H1 (cell line): ENCODE measurements at regions of chr7 and their contacts with region 1.

Region 1: DNA sequence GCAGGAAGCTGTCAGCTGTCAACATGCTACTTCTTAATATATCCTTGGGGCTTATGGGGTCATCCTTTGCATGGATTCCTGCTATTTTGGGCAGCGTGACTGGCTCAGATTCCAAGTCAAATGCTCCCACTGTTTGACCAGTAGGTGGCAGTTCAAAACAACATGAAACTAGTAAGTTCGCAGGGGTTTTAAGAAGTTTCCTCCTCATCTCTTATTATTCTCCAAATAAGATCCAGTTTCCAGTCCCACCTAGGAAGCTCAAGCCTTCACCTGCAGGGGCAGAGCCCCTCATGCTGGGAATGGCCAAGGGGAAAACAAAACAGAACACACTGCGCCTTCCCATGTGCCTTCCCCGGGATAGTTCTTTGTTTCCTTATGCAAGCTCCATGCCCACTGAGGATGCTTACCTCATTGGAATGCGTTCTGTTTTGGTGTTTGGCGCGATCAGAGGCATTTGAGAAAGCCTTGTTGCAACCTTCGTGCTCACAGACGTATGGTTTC is 259.8 kb downstream of the GLI3 start:
- DNase-seq: peak in 1 of 2 experiments; percentile 55
- H3K4me3 ChIP-seq: no peak overlapping the region
- H3K27ac ChIP-seq: peak overlapping the region; percentile 13; the same call in 1 of the 2 replicates
- H3K4me1 ChIP-seq: peaks cover 0 to 11% (median 4%) of the 10 kb centered on the region in 4 experiments; a peak in 5 of 7 replicates
- H3K27me3 ChIP-seq: no peaks in the 10 kb centered on the region
- CTCF ChIP-seq: peak; percentile 27 to 67 (median 60)
- EP300 ChIP-seq: no peak
- POLR2A ChIP-seq: no peak
- RAD21 ChIP-seq: peak; percentile 64 to 78

Region 2: DNA sequence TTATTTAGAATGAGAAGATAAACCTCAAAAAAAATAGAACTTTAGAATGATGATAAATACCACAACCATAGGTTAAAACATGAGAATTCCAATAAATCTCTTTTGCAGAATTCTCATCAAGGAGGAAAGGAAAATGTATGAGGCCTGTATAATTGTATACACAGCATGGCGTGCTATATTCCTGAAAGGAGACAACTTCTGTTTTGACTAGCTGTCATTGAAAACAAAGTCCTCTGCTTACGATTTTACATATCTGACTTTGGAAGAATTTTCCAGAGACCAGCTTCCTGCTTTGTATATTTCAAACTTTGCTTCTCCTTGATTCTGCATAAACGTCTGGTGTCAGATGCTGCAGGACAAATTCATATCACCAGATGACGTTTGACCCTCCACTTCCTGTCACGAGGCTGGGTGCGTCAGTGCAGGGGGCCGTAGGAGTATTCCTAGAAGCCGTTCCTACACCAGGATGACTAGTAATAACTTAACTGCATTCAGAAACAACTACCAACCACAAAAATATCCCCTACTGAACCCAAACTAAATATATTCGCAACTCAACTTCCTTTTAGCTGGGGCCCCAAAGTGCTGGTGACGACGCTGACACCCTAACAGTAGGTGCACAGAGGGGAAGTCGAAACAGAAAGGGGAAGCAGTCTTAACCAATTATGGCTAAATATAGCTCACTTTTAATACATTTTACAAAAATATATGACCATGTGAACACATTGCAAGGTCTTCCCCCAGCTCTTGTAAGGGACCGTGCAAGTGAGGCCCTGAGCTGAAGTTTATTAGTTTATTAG is 95.7 kb before region 1 on chr7:
- CTCF ChIA-PET with region 1: no interaction called
- POLR2A ChIA-PET with region 1: no interaction called
- DNase-seq: no peak
- H3K4me3 ChIP-seq: no peak overlapping the region; a peak in 1 of 8 replicates
- H3K27ac ChIP-seq: no peak overlapping the region
- H3K4me1 ChIP-seq: peaks cover 0 to 4% (median 0%) of the 10 kb centered on the region in 4 experiments; a peak in 1 of 7 replicates
- H3K27me3 ChIP-seq: no peaks in the 10 kb centered on the region
- CTCF ChIP-seq: no peak
- EP300 ChIP-seq: no peak
- POLR2A ChIP-seq: no peak
- RAD21 ChIP-seq: no peak

Region 3: DNA sequence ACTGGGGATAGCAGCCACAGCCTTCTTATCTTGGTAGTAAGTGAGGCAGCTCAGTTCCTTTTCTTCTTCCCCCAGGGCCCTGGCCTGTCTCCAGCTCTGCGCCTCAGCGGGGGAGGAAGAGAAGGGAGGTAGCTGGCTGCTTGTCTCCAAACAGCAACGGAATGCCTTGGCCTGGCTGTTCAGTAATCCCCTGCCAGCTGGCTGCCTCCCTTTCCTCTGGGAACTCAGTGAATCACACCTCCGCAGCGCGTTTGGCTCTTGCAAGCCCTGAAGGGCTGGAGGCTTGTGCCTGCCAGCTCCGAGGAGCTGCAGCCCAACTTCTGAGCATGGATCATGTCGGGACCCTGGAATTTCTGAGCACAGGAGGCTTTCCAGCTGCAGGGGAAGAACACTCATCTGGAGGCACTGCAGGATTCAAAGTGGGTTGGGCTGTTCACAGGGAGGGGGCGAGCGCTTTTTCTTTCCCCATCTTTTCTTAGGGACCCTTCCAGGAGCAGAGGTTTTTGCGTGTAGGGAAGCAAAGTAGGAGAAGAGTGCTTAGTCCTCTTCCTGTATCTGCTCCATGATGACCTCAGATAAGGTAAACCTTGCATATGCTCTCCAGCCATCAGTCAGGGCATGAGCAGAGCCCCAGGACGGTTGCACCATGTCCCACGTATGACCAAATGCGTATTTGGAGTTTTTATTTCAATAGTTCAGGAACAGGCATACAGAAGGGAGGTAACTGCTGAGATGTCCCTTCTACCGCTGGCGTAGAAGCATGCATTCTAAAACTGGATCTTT is 21.1 kb before region 1 on chr7:
- CTCF ChIA-PET with region 1: interaction called, 13 read pairs
- POLR2A ChIA-PET with region 1: no interaction called
- DNase-seq: peak; percentile 57 to 66
- H3K4me3 ChIP-seq: no peak overlapping the region
- H3K27ac ChIP-seq: no peak overlapping the region
- H3K4me1 ChIP-seq: peaks cover 0 to 9% (median 7%) of the 10 kb centered on the region in 4 experiments; a peak in 6 of 7 replicates
- H3K27me3 ChIP-seq: peaks cover 0 to 2% (median 0%) of the 10 kb centered on the region in 4 experiments; a peak in 2 of 7 replicates
- CTCF ChIP-seq: no peak
- EP300 ChIP-seq: no peak
- POLR2A ChIP-seq: no peak
- RAD21 ChIP-seq: peak; percentile 15 to 16; a peak in 2 of 4 replicates

Region 4: GRCh38 chr7:42002654-42003053 is 25.5 kb after region 1 on chr7:
- CTCF ChIA-PET with region 1: interaction called, 14 read pairs
- POLR2A ChIA-PET with region 1: no interaction called
- DNase-seq: no peak
- H3K4me3 ChIP-seq: no peak overlapping the region
- H3K27ac ChIP-seq: no peak overlapping the region
- H3K4me1 ChIP-seq: no peaks in the 10 kb centered on the region
- H3K27me3 ChIP-seq: no peaks in the 10 kb centered on the region
- CTCF ChIP-seq: no peak
- EP300 ChIP-seq: no peak
- POLR2A ChIP-seq: no peak
- RAD21 ChIP-seq: no peak

Region 5: DNA sequence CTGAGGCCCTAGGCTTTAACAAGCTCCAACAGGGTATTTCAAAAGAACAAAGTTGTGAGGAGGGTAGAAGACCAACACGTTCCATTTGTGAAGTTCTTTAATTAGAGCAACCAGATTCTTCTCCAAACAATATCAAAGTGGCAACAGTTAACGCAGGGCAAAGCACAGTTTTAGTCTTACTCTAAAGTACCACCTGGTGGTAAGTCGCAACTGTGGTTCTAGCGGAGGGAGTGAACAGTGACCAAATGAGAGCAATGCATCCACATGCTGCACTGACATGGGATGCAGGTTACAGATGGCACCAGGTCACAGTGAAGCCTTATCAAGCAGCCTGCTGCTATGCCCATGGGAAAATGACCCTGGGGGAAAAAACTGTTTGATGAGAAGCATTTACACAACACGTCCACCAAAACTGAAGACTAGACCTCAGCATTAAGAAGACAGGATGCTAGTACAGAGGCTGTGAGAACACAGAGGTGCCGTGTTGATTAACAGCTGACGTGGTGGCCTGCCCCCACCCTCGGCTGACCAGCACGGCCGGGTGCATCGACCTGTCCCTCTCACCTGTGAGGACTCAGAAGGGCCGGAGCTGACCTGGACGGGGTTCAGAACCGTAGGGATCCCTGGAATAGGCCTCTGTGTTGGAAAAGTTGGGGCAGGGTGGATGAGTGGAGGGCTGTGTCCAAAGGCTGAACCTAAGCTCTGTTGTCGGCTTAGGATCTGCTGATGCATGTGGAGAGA is 48.6 kb after region 1 on chr7:
- CTCF ChIA-PET with region 1: interaction called, 33 read pairs
- POLR2A ChIA-PET with region 1: no interaction called
- DNase-seq: no peak
- H3K4me3 ChIP-seq: no peak overlapping the region
- H3K27ac ChIP-seq: no peak overlapping the region
- H3K4me1 ChIP-seq: peaks cover 6 to 26% (median 17%) of the 10 kb centered on the region in 4 experiments; a peak in 6 of 7 replicates
- H3K27me3 ChIP-seq: no peaks in the 10 kb centered on the region
- CTCF ChIP-seq: peak in 1 of 3 experiments; percentile 11; a peak in 1 of 4 replicates
- EP300 ChIP-seq: no peak
- POLR2A ChIP-seq: no peak
- RAD21 ChIP-seq: no peak

Region 6: GRCh38 chr7:42574685-42575084 is 597.5 kb after region 1 on chr7:
- CTCF ChIA-PET with region 1: interaction called, 22 read pairs
- POLR2A ChIA-PET with region 1: no interaction called
- DNase-seq: no peak
- H3K4me3 ChIP-seq: no peak overlapping the region
- H3K27ac ChIP-seq: no peak overlapping the region
- H3K4me1 ChIP-seq: no peaks in the 10 kb centered on the region
- H3K27me3 ChIP-seq: no peaks in the 10 kb centered on the region
- CTCF ChIP-seq: peak in 2 of 3 experiments; percentile 46 to 52; a peak in 3 of 4 replicates
- EP300 ChIP-seq: no peak
- POLR2A ChIP-seq: no peak
- RAD21 ChIP-seq: peak; percentile 73 to 78